Activated B cell treated with CpG ODN at 0.5 μM for 24 hours (primary cell): ENCODE measurements at regions of chr2 and their contacts with region 1.

Region 1: DNA sequence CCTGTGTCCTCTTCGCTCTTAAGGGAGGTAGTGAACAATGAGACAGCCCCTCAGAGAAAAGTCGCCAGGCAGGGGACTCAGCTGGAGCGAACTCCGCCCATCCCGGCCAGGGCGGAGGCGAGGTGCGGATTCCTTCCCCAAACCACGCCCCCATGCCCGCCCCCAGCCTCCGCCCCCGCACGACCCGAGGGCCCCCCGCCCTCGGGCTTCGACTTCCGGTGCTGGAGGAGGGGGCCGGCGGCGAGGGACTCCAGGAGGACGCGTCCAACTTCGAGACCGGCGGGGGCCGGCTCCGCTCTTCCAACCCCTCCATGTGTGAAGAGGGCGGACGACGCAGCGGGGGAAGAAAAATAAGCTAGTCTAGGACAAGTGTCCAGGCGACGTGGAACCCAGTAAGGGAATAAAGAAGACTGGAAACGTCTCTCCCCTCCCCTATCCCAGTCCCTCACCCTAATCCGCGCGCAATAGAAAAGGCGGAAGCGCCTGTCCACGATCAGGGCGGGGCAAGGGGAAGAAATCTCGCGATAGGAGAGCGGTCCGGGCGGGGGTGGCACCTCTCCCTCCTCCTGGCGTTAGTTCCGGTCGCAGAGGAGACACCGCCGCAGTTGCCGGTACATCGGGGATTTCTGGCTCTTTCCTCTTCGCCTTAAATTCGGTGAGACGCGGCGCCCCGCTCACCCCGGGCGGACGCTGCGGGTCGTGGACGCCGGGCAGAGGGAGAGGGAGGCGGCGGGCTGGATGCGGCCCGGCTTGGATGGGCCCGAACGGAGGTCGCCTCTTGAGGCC is at the start of gene BZW1:
- DNase-seq: peak; percentile 94
- ATAC-seq: peak; percentile 80
- H3K4me3 Mint-ChIP-seq: peak within 1 kb of the TSS; percentile 98
- H3K27ac Mint-ChIP-seq: peak within 1 kb of the TSS; percentile 99
- H3K4me1 Mint-ChIP-seq: peaks cover 34% of the 10 kb centered on the region
- H3K27me3 Mint-ChIP-seq: no peaks in the 10 kb centered on the region
- CTCF ChIP-seq: no peak
- total RNA-seq, gene BZW1: 174 and 197 TPM in 2 replicates

Region 2: GRCh38 chr2:199955339-199956261 is 855.9 kb before region 1 on chr2 and contains the starts of genes MAIP1 and TYW5:
- CTCF ChIA-PET with region 1: no interaction called
- POLR2A ChIA-PET with region 1: no interaction called
- intact Hi-C with region 1: loop called (anchors 10 kb)
- DNase-seq: peak; percentile 75
- ATAC-seq: peak; percentile 87
- H3K4me3 Mint-ChIP-seq: peak within 1 kb of the TSS; percentile 99
- H3K27ac Mint-ChIP-seq: peak within 1 kb of the TSS; percentile 91
- H3K4me1 Mint-ChIP-seq: peaks cover 48% of the 10 kb centered on the region
- H3K27me3 Mint-ChIP-seq: no peaks in the 10 kb centered on the region
- CTCF ChIP-seq: no peak
- total RNA-seq, gene MAIP1: 20.2 and 20.7 TPM in 2 replicates
- total RNA-seq, gene TYW5: 10.5 and 12.5 TPM in 2 replicates

Region 3: GRCh38 chr2:200578778-200579177 is 232.8 kb before region 1 on chr2:
- CTCF ChIA-PET with region 1: no interaction called
- POLR2A ChIA-PET with region 1: no interaction called
- intact Hi-C with region 1: loop called (anchors 2 kb)
- DNase-seq: no peak
- ATAC-seq: peak; percentile 42
- H3K4me3 Mint-ChIP-seq: no peak overlapping the region
- H3K27ac Mint-ChIP-seq: no peak overlapping the region
- H3K4me1 Mint-ChIP-seq: no peaks in the 10 kb centered on the region
- H3K27me3 Mint-ChIP-seq: peaks cover 2% of the 10 kb centered on the region
- CTCF ChIP-seq: no peak

Region 4: GRCh38 chr2:200795044-200795443 is 16.5 kb before region 1 on chr2:
- CTCF ChIA-PET with region 1: no interaction called
- POLR2A ChIA-PET with region 1: no interaction called
- intact Hi-C with region 1: no loop called
- DNase-seq: no peak
- ATAC-seq: no peak
- H3K4me3 Mint-ChIP-seq: no peak overlapping the region
- H3K27ac Mint-ChIP-seq: no peak overlapping the region
- H3K4me1 Mint-ChIP-seq: no peaks in the 10 kb centered on the region
- H3K27me3 Mint-ChIP-seq: no peaks in the 10 kb centered on the region
- CTCF ChIP-seq: no peak

Region 5: GRCh38 chr2:200888704-200889625 is 77.4 kb after region 1 on chr2 and contains the starts of genes NIF3L1 and PPIL3:
- CTCF ChIA-PET with region 1: no interaction called
- POLR2A ChIA-PET with region 1: interaction called, 12 read pairs
- intact Hi-C with region 1: loop called (anchors 1 kb)
- DNase-seq: peak; percentile 90
- ATAC-seq: peak; percentile 80
- H3K4me3 Mint-ChIP-seq: peak within 1 kb of the TSS; percentile 99
- H3K27ac Mint-ChIP-seq: peak within 1 kb of the TSS; percentile 100
- H3K4me1 Mint-ChIP-seq: peaks cover 40% of the 10 kb centered on the region
- H3K27me3 Mint-ChIP-seq: no peaks in the 10 kb centered on the region
- CTCF ChIP-seq: no peak
- total RNA-seq, gene NIF3L1: 32.2 and 32.3 TPM in 2 replicates
- total RNA-seq, gene PPIL3: 43.5 and 52.5 TPM in 2 replicates

Region 6: DNA sequence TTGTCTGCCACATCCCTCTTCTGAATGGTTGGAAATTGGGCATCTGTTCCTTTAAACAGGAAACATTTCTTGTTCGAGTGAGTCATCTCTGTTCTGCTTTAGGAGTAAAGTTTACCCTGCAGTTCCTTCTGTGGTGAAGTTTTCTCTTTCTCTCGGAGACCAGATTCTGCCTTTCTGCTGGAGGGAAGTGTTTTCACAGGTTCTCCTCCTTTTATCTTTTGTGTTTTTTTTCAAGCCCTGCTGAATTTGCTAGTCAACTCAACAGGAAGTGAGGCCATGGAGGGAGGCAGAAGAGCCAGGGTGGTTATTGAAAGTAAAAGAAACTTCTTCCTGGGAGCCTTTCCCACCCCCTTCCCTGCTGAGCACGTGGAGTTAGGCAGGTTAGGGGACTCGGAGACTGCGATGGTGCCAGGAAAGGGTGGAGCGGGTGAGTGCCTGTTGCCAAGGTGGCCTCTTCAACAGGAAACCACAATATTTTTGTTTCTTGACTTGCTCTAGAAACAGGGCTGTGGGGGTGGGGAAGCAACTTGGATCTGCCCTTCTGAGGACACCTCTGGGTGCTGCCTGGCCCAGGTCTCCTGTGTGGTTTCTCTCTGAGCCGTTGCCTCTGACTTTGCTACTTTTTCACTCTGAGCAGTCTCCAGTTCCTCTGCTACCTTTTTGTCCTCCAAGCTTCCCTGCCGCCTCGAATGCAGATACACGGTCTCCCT is 446.6 kb after region 1 on chr2:
- CTCF ChIA-PET with region 1: no interaction called
- POLR2A ChIA-PET with region 1: no interaction called
- intact Hi-C with region 1: loop called (anchors 1 kb)
- DNase-seq: peak; percentile 68
- ATAC-seq: peak; percentile 61
- H3K4me3 Mint-ChIP-seq: peak overlapping the region; percentile 90
- H3K27ac Mint-ChIP-seq: peak overlapping the region; percentile 98
- H3K4me1 Mint-ChIP-seq: peaks cover 83% of the 10 kb centered on the region
- H3K27me3 Mint-ChIP-seq: no peaks in the 10 kb centered on the region
- CTCF ChIP-seq: no peak

Region 7: DNA sequence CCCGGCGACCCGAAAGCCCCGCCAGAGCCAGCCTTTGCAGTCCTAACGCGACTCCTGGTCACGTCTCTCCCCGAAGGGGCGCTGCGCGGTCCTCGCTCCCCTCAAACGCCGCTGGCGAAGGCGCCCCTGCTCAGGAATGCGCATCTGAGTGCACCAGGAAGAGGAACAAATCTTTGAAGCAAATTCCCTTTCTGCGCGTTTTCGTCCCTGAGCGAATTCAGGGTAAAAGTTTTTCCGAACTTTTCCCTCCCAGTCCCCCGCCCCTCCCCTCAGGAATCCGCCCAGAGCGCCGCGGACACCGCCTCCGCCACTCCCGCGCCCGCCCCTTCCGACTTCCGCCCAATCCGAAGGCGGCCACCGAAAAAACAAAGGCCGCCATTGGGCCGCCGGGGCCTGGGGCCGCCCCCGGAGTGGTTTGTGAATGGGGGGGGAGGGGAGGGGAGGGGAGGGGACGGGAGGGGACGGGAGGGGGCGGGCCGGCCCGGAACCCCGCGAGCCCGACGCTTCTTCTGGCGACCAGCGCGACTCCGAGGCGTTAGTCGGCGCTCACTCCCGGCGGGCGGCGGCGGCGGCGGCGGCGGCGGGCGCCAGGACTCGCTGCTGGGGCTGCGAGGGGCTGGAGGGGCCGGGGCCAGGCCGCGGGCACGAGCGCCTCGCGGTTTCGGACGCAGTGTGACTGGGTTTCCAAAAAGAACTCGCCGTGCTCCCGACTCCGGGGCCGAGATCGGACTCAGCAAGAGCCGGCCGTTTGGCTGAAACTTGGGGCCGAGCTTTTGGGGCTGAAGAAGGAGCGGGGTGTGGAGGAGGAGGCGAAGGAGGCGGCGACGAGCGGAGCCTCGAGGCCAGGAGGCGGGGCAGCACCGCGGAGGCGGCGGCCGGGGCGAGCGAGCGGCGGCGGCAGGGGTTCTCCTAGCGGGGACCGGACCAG is 1222.1 kb after region 1 on chr2 and contains the start of gene FZD7:
- CTCF ChIA-PET with region 1: no interaction called
- POLR2A ChIA-PET with region 1: no interaction called
- intact Hi-C with region 1: loop called (anchors 10 kb)
- DNase-seq: peak; percentile 79
- ATAC-seq: peak; percentile 87
- H3K4me3 Mint-ChIP-seq: peak within 1 kb of the TSS; percentile 86
- H3K27ac Mint-ChIP-seq: peak within 1 kb of the TSS; percentile 14
- H3K4me1 Mint-ChIP-seq: peaks cover 12% of the 10 kb centered on the region
- H3K27me3 Mint-ChIP-seq: peaks cover 17% of the 10 kb centered on the region
- CTCF ChIP-seq: no peak
- total RNA-seq, gene FZD7: 0.33 and 0.37 TPM in 2 replicates